ENCODE measurements at regions of chr1 and their contacts with region 1.

Region 1: DNA sequence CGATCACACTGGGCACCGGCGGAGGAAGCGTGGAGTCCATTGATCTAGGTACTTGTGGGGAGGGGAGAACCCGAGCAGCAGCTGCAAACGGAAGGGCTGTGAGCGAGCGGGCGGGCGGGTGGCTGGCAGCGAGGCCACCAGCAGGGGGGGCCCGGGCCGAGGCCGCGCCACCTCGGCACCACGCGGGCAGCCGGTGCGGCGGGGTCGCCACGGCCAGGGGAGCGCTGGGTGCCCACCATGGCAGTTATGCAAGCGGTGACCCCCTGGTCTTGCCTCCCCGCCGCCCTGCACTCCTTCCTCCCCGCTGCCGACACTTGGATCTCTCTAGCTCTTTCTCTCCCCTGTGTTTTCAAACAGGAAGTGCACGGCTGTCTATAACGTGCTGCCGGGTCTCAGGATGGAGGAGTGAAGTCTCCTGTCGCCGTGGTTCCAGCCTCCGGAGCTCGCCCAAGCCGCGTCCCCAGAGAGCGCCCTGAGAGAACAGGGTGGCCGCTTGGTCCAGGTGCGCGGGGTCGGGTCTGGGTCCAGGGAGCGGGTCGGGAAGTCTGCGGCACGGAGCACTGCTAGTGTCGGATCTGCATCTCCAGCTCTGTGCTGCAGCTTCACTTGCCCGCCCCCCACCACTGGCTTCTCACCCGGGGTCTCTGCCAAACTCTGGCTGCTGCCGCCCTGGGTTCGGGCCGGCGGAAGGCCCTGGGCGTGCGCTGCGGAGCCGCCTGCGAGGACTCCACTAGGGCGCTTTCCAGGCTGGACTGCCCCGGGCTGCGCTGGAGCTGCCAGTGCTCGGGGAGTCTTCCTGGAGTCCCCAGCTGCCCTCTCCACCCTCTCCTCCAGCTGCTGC is 22.7 kb downstream of the LRRC8D start:
- DNase-seq: peak; percentile 55 to 83 (median 72)
- H3K4me3 ChIP-seq: peak overlapping the region; percentile 61 to 85 (median 73)
- H3K27ac ChIP-seq: peak overlapping the region in 58 of 59 donors; percentile 20 to 90 (median 84)
- H3K27me3 ChIP-seq: no peaks in the 10 kb centered on the region
- CTCF ChIP-seq: peak in 55 of 56 donors; percentile 12 to 84 (median 60)

Region 2: GRCh38 chr1:89877756-89878155 is 34.3 kb after region 1 on chr1:
- intact Hi-C with region 1: loop called in 1 of 2 experiments (anchors 5 kb)
- DNase-seq: no peak
- H3K4me3 ChIP-seq: no peak overlapping the region
- H3K27ac ChIP-seq: peak overlapping the region in 33 of 59 donors; percentile 0 to 85 (median 48)
- H3K27me3 ChIP-seq: no peaks in the 10 kb centered on the region
- CTCF ChIP-seq: no peak

Region 3: DNA sequence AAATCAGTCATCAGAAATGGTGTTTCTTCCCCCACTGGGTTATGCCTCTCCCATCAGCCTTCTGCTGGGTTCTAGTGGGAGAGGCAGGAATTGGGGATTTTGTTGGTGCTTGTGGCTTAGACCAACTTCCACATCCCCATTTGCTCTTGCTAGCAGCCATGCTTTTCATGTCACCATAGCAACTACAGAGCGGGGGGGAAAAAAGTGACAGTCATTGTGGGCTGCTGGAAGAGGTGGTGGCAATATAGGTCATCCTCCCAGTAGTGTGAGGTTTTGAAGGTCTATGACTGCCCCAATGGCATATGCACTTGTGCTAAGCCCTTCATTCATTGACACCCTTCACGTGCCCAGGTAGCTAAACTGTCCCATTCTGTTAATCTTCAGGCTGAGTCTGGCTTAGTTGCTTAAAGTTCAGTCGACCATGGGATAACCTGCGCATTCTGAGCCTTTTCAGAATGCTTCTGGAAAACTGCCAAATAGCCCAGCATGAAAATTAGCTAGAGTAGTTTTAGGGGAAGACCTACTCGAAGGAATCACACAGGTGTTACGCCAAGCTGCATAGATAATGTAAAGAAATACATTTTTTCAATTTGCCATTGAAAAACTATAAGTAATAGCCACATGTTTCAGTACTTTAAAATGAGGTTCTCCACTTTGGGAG is 97.7 kb after region 1 on chr1:
- intact Hi-C with region 1: loop called (anchors 2 to 5 kb)
- DNase-seq: no peak
- H3K4me3 ChIP-seq: no peak overlapping the region
- H3K27ac ChIP-seq: peak overlapping the region in 57 of 59 donors; percentile 58 to 97 (median 91)
- H3K27me3 ChIP-seq: no peaks in the 10 kb centered on the region
- CTCF ChIP-seq: no peak

Region 4: GRCh38 chr1:90386899-90387720 is 543.6 kb after region 1 on chr1:
- intact Hi-C with region 1: no loop called
- DNase-seq: no peak
- H3K4me3 ChIP-seq: no peak overlapping the region
- H3K27ac ChIP-seq: no peak overlapping the region
- H3K27me3 ChIP-seq: peaks cover 0 to 3% (median 0%) of the 10 kb centered on the region in 45 donors
- CTCF ChIP-seq: no peak